Colonic mucosa (tissue), 4 donors: ENCODE measurements at regions of chr16 and their contacts with region 1.

Region 1: DNA sequence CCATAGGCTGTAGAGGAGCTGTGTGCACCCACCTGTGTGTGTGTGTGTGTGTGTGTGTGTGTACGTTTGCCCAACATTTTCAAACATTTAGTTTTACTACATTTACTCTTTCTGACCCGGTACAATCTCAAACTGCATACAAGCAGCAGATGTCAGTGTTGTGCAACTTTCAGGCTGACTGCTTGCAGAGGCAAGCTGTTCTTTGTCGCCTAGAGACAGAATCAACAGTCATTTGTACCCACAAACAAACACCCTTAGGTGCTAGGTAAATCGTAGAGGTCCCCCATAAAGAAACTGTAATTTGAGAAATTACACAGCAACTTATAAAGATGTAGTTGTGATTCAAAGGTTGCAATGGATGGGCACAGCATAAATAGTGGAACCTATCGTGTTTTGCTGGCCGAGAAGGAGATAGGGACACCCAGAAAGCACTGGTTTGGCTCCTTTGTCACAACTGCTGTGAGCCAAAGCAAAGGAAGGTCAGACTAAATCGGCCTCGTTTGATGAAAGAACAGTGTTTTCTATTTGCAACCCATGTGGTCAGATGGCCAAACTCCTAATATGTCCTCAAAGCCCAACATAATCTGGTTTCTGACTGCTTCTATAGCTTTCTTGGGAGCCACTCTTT is 478.4 kb downstream of the TOX3 start:
- DNase-seq: peak; percentile 31
- H3K4me3 ChIP-seq: no peak overlapping the region
- H3K27ac ChIP-seq: no peak overlapping the region
- H3K4me1 ChIP-seq: no peaks in the 10 kb centered on the region
- H3K27me3 ChIP-seq: no peaks in the 10 kb centered on the region
- CTCF ChIP-seq: no peak

Region 2: GRCh38 chr16:52123061-52123843 is 54.7 kb after region 1 on chr16:
- intact Hi-C with region 1: no loop called
- DNase-seq: no peak
- H3K4me3 ChIP-seq: no peak overlapping the region
- H3K27ac ChIP-seq: no peak overlapping the region
- H3K4me1 ChIP-seq: no peaks in the 10 kb centered on the region
- H3K27me3 ChIP-seq: no peaks in the 10 kb centered on the region
- CTCF ChIP-seq: no peak

Region 3: DNA sequence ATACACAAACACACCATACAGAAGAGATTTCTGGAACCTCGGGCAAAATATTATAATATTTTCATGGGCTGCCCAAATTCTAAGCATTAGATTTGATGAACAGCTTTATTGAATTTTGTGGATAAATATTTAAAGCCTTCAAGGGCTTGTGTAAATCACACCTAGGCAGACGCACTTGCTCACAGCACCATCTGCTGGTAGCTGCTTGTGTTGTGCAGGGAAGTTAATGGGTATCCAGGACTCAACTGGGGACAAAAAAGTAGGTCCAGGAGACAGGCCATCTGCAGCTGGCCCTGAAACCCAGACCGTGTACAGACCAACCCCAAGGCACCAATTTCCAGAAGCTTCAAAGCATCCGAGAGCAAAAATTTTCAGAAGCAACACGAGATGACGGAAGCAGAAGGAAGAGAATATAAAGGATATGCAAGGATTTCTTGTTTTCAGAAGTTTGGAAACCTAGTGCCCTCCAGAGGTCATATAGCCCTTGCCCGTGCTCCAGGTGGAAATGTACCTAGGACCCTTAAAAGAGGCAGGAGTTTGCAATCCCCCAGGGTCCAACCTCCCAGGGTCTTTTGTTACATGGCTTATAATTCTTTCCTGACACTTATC is 844.1 kb after region 1 on chr16:
- intact Hi-C with region 1: loop called (anchors 5 kb)
- DNase-seq: peak; percentile 81
- H3K4me3 ChIP-seq: no peak overlapping the region
- H3K27ac ChIP-seq: no peak overlapping the region
- H3K4me1 ChIP-seq: no peaks in the 10 kb centered on the region
- H3K27me3 ChIP-seq: no peaks in the 10 kb centered on the region
- CTCF ChIP-seq: peak; percentile 78

Region 4: GRCh38 chr16:53022374-53022773 is 953.8 kb after region 1 on chr16:
- intact Hi-C with region 1: loop called (anchors 5 kb)
- DNase-seq: peak; percentile 34
- H3K4me3 ChIP-seq: no peak overlapping the region
- H3K27ac ChIP-seq: no peak overlapping the region
- H3K4me1 ChIP-seq: no peaks in the 10 kb centered on the region
- H3K27me3 ChIP-seq: no peaks in the 10 kb centered on the region
- CTCF ChIP-seq: peak; percentile 38